Posterior vena cava (tissue), 2 donors: ENCODE measurements at regions of chr9 and their contacts with region 1.

Region 1: GRCh38 chr9:406886-407654 is 192.4 kb downstream of the DOCK8 start:
- DNase-seq: no peak

Region 2: GRCh38 chr9:589723-590122 is 182.7 kb after region 1 on chr9:
- intact Hi-C with region 1: loop called in 1 of 2 experiments (anchors 5 kb)
- DNase-seq: no peak